ENCODE measurements at regions of chr1 and their contacts with region 1.

Region 1: GRCh38 chr1:95233737-95234500 is at the start of gene RWDD3:
- DNase-seq: peak; percentile 86 to 96 (median 93)
- ATAC-seq: peak; percentile 98
- H3K4me3 ChIP-seq: peak within 1 kb of the TSS; percentile 78
- H3K4me3 Mint-ChIP-seq: peak within 1 kb of the TSS; percentile 89 to 97 (median 92)
- H3K27ac ChIP-seq: peak within 1 kb of the TSS; percentile 79
- H3K27ac Mint-ChIP-seq: peak within 1 kb of the TSS; percentile 86 to 97 (median 91)
- H3K4me1 ChIP-seq: peaks cover 6 to 12% of the 10 kb centered on the region in 2 donors
- H3K4me1 Mint-ChIP-seq: peaks cover 23 to 54% (median 46%) of the 10 kb centered on the region in 7 donors
- H3K27me3 ChIP-seq: no peaks in the 10 kb centered on the region
- H3K27me3 Mint-ChIP-seq: peaks cover 16 to 30% (median 23%) of the 10 kb centered on the region in 5 donors
- total RNA-seq, gene RWDD3: 9.1 to 27.9 (median 20.0) TPM

Region 2: GRCh38 chr1:94854458-94855306 is 379.2 kb before region 1 on chr1:
- CTCF ChIA-PET with region 1: no interaction called
- POLR2A ChIA-PET with region 1: no interaction called
- intact Hi-C with region 1: loop called (anchors 1 to 2 kb)
- DNase-seq: peak; percentile 52 to 83 (median 74)
- ATAC-seq: peak; percentile 99
- H3K4me3 ChIP-seq: peak overlapping the region; percentile 47
- H3K4me3 Mint-ChIP-seq: no peak overlapping the region
- H3K27ac ChIP-seq: peak overlapping the region; percentile 43
- H3K27ac Mint-ChIP-seq: no peak overlapping the region
- H3K4me1 ChIP-seq: peaks cover 0 to 3% of the 10 kb centered on the region in 2 donors
- H3K4me1 Mint-ChIP-seq: no peaks in the 10 kb centered on the region
- H3K27me3 ChIP-seq: no peaks in the 10 kb centered on the region
- H3K27me3 Mint-ChIP-seq: peaks cover 0 to 14% (median 5%) of the 10 kb centered on the region in 5 donors

Region 3: GRCh38 chr1:94871031-94871430 is 362.9 kb before region 1 on chr1:
- CTCF ChIA-PET with region 1: no interaction called
- POLR2A ChIA-PET with region 1: no interaction called
- intact Hi-C with region 1: no loop called
- DNase-seq: no peak
- ATAC-seq: no peak
- H3K4me3 ChIP-seq: no peak overlapping the region
- H3K4me3 Mint-ChIP-seq: no peak overlapping the region
- H3K27ac ChIP-seq: no peak overlapping the region
- H3K27ac Mint-ChIP-seq: no peak overlapping the region
- H3K4me1 ChIP-seq: no peaks in the 10 kb centered on the region
- H3K4me1 Mint-ChIP-seq: peaks cover 0 to 13% (median 6%) of the 10 kb centered on the region in 7 donors
- H3K27me3 ChIP-seq: no peaks in the 10 kb centered on the region
- H3K27me3 Mint-ChIP-seq: peaks cover 0 to 5% (median 0%) of the 10 kb centered on the region in 5 donors

Region 4: DNA sequence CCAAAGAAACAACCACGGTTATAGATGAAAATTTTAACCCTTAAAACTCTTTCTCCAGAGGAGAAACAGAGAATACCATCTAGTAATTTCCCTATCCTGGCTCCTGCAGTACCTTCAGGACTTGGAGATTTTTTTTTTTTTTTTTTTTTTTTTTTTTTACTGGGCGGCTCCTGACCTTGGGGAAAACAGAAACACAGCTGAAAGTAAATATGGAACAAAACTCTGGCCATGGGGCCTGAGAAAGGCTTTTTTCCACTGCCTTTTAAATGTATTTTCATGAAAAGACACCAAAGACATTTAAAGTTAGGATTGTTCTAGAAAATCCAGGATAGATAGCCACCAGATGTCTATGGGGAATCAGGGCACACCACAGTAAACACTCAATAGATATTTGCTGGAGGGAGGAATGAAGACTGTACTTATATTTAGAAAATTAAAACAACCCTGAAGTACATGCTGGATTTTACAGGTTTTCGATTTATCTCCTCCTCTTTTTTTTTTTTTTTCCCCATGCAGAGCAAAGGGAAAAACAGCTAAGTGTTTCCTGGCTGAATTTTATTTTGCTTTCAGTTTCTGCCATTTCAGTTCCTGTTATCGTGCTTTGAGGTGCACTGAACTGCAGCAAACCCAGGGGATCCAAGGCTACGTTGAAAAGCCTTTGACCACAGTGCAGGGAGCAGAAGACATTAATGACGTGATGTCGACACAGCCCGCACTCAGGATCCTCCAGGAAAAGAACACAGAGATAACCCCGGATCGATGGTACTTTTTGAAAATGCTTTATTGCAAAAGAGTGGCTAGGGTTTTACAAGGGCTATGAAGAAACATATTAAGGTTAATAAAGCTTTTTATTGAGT is 271.3 kb before region 1 on chr1:
- CTCF ChIA-PET with region 1: no interaction called
- POLR2A ChIA-PET with region 1: interaction called, 3 read pairs
- intact Hi-C with region 1: loop called in 1 of 2 experiments (anchors 1 kb)
- DNase-seq: peak in 7 of 9 donors; percentile 21 to 41 (median 35)
- ATAC-seq: peak; percentile 73
- H3K4me3 ChIP-seq: peak overlapping the region; percentile 53
- H3K4me3 Mint-ChIP-seq: peak overlapping the region; percentile 82 to 99 (median 90)
- H3K27ac ChIP-seq: peak overlapping the region; percentile 68
- H3K27ac Mint-ChIP-seq: peak overlapping the region; percentile 87 to 99 (median 96)
- H3K4me1 ChIP-seq: peaks cover 0 to 18% of the 10 kb centered on the region in 2 donors
- H3K4me1 Mint-ChIP-seq: peaks cover 0 to 31% (median 15%) of the 10 kb centered on the region in 7 donors
- H3K27me3 ChIP-seq: no peaks in the 10 kb centered on the region
- H3K27me3 Mint-ChIP-seq: no peaks in the 10 kb centered on the region

Region 5: GRCh38 chr1:95116580-95117206 is 117.2 kb before region 1 on chr1:
- CTCF ChIA-PET with region 1: interaction called, 9 read pairs
- POLR2A ChIA-PET with region 1: no interaction called
- intact Hi-C with region 1: loop called (anchors 1 to 10 kb)
- DNase-seq: peak; percentile 8 to 53 (median 44)
- ATAC-seq: peak; percentile 77
- H3K4me3 ChIP-seq: peak overlapping the region; percentile 57
- H3K4me3 Mint-ChIP-seq: peak overlapping the region; percentile 73 to 97 (median 91)
- H3K27ac ChIP-seq: no peak overlapping the region
- H3K27ac Mint-ChIP-seq: peak overlapping the region in 3 of 9 donors; percentile 5 to 86 (median 33)
- H3K4me1 ChIP-seq: peaks cover 4% of the 10 kb centered on the region in 2 donors
- H3K4me1 Mint-ChIP-seq: peaks cover 0 to 14% (median 9%) of the 10 kb centered on the region in 7 donors
- H3K27me3 ChIP-seq: peaks cover 0 to 3% of the 10 kb centered on the region in 2 donors
- H3K27me3 Mint-ChIP-seq: peaks cover 21 to 67% (median 52%) of the 10 kb centered on the region in 5 donors

Region 6: GRCh38 chr1:96721416-96722160 is 1487.7 kb after region 1 on chr1 and contains the start of gene PTBP2:
- CTCF ChIA-PET with region 1: no interaction called
- POLR2A ChIA-PET with region 1: no interaction called
- intact Hi-C with region 1: loop called in 1 of 2 experiments (anchors 5 kb)
- DNase-seq: peak; percentile 75 to 90 (median 86)
- ATAC-seq: peak; percentile 93
- H3K4me3 ChIP-seq: peak within 1 kb of the TSS; percentile 89
- H3K4me3 Mint-ChIP-seq: peak within 1 kb of the TSS; percentile 88 to 99 (median 97)
- H3K27ac ChIP-seq: peak within 1 kb of the TSS; percentile 84
- H3K27ac Mint-ChIP-seq: peak within 1 kb of the TSS; percentile 83 to 97 (median 95)
- H3K4me1 ChIP-seq: peaks cover 10 to 11% of the 10 kb centered on the region in 2 donors
- H3K4me1 Mint-ChIP-seq: peaks cover 17 to 35% (median 29%) of the 10 kb centered on the region in 7 donors
- H3K27me3 ChIP-seq: no peaks in the 10 kb centered on the region
- H3K27me3 Mint-ChIP-seq: peaks cover 0 to 16% (median 0%) of the 10 kb centered on the region in 5 donors
- total RNA-seq, gene PTBP2: 14.9 to 32.6 (median 25.6) TPM